ENCODE measurements at regions of chr7 and their contacts with region 1.

Region 1: GRCh38 chr7:12524794-12525386 is 45.6 kb upstream of the SCIN start:
- DNase-seq: no peak
- H3K4me3 Mint-ChIP-seq: no peak overlapping the region
- H3K27ac Mint-ChIP-seq: no peak overlapping the region
- H3K4me1 Mint-ChIP-seq: no peaks in the 10 kb centered on the region
- H3K27me3 Mint-ChIP-seq: peaks cover 12% of the 10 kb centered on the region

Region 2: DNA sequence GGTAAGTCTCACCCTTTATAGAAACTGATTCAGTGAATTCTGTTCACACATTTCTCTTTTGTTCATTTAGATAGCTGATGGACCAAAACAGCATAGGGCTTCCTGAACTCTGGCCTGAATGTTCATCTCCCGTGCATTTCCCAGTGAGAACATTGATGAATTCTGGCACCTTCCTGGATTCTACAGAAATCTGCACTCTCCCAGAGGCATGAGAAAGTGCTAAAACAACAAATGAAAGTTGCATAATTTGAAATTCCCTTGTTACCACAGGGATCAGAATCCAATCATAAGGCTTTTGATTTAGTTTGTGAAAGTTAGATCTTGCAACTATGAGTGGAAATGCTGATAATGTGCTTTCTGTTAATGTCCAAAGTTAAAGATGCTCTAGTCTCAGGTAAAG is 16.0 kb after region 1 on chr7:
- CTCF ChIA-PET with region 1: interaction called, 12 read pairs
- POLR2A ChIA-PET with region 1: no interaction called
- intact Hi-C with region 1: no loop called
- DNase-seq: no peak
- H3K4me3 Mint-ChIP-seq: no peak overlapping the region
- H3K27ac Mint-ChIP-seq: no peak overlapping the region
- H3K4me1 Mint-ChIP-seq: no peaks in the 10 kb centered on the region
- H3K27me3 Mint-ChIP-seq: peaks cover 4% of the 10 kb centered on the region

Region 3: GRCh38 chr7:12594056-12594455 is 69.2 kb after region 1 on chr7:
- CTCF ChIA-PET with region 1: no interaction called
- POLR2A ChIA-PET with region 1: no interaction called
- intact Hi-C with region 1: no loop called
- DNase-seq: no peak
- H3K4me3 Mint-ChIP-seq: no peak overlapping the region
- H3K27ac Mint-ChIP-seq: no peak overlapping the region
- H3K4me1 Mint-ChIP-seq: no peaks in the 10 kb centered on the region
- H3K27me3 Mint-ChIP-seq: peaks cover 2% of the 10 kb centered on the region

Region 4: DNA sequence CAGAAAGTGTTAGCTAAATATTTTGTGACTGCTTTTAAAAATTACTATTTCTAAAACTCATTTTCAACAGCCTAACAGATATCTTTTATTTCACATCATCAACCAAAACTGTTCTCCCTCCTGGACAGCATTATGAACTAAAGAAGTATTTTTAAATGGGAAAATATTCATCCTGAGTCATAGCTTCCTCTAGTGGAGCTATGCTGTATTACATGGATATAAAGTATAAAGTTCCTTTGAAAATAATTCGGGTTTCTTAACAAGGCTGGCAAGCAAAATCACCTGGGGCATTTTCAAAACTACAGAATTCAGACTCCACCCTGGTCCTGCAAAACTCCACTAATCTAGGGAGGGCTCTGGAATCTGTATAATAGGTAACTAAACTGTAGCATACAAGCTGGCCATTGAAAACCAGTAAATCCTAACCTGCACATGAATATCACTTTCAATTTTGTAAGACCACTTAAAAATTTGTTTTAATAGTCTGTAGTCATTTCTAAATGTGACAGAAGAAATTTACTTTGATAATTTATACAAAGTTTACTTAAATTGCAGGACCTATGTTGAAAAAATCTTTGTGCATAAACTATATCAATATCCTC is 99.1 kb after region 1 on chr7:
- CTCF ChIA-PET with region 1: interaction called, 41 read pairs
- POLR2A ChIA-PET with region 1: no interaction called
- intact Hi-C with region 1: loop called (anchors 1 kb)
- DNase-seq: no peak
- H3K4me3 Mint-ChIP-seq: no peak overlapping the region
- H3K27ac Mint-ChIP-seq: no peak overlapping the region
- H3K4me1 Mint-ChIP-seq: no peaks in the 10 kb centered on the region
- H3K27me3 Mint-ChIP-seq: peaks cover 20% of the 10 kb centered on the region

Region 5: DNA sequence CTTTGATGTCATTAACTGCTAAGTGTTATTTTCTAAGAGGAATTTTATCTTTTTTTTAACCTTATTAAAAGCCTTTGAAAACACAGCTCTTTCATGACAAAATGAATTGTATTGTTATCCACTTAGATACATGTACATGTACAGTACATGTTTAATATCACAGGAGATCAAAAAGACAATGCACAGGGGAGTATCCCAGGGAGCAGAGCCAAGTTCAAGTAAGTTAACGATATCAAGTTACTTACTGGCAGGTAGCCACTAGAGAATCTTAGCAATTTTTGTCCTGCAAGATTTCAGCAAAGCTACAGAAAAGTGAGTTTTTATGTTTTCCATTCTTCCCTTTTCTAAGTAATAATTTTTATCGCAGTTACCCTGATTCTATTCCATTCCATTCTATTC is 128.6 kb after region 1 on chr7:
- CTCF ChIA-PET with region 1: no interaction called
- POLR2A ChIA-PET with region 1: no interaction called
- intact Hi-C with region 1: no loop called
- DNase-seq: no peak
- H3K4me3 Mint-ChIP-seq: no peak overlapping the region
- H3K27ac Mint-ChIP-seq: no peak overlapping the region
- H3K4me1 Mint-ChIP-seq: no peaks in the 10 kb centered on the region
- H3K27me3 Mint-ChIP-seq: no peaks in the 10 kb centered on the region

Region 6: DNA sequence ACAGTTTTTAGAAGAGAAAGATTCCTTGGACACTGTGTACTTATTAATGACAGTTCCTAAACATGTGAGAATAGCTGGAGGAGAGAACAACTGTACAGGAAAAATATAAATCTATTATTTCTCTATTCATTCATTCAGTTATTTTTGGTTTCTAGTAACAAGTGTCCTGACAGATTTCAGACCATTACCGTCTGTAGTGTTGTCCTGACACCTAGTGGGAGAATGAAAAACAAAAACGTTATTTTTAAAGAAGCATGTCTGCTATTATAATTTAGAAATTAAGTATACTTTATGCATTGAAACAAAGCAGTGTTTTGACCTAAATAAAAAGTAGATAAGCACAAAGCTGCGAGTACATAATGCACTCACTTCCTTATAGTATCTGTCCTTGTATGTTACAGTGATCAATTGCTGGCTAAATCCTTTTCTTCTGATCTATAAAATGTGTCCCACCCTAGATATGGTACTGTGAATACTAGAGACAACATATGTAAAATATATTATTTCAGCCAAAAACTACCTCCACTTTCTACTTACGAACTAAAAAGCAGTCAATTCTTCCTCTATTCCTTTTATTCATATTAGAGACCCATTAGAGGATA is 738.1 kb after region 1 on chr7:
- CTCF ChIA-PET with region 1: interaction called, 11 read pairs
- POLR2A ChIA-PET with region 1: no interaction called
- intact Hi-C with region 1: loop called (anchors 1 kb)
- DNase-seq: no peak
- H3K4me3 Mint-ChIP-seq: no peak overlapping the region
- H3K27ac Mint-ChIP-seq: no peak overlapping the region
- H3K4me1 Mint-ChIP-seq: no peaks in the 10 kb centered on the region
- H3K27me3 Mint-ChIP-seq: peaks cover 2% of the 10 kb centered on the region

Region 7: DNA sequence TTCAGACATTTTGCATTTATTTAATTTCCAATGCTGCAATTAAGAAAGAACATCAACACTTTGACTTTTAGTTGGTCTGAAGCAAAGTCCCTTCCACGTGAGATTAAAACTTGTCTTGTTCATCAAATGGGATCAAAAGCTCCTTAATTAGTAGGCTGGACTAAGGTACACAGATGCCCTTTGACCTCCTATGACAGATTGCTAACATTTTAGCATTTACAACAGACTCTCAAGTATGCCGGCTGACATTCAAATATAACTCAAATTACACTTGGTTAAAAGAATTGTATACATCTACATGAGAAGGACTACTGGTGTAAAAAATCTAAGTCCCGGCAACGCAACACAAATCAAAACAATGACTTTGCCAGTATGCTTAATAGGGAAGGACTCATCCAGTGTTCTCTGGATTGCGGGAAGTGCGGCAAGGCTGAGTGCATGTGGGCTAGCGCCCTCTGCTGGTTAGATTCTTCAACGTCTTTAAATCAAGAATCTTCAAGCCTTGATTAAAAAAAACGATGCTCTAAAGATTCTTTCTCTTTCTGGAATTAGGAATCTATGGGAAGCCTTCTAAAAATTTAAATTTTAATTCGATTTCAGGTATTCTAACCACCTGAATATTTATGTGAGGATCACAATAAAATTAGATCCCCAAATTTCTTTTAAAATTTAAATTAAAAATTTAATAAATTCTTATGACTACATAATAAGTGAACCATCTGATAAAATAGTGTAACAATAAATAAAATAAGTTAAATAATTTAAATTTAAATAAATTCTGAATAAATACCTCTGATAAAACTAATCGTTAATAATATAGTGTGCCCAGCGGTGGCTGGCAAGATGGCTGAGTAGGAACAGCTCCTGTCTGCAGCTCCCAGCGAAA is 1932.9 kb after region 1 on chr7:
- CTCF ChIA-PET with region 1: interaction called, 3 read pairs
- POLR2A ChIA-PET with region 1: no interaction called
- intact Hi-C with region 1: loop called (anchors 5 kb)
- DNase-seq: peak; percentile 49
- H3K4me3 Mint-ChIP-seq: no peak overlapping the region
- H3K27ac Mint-ChIP-seq: no peak overlapping the region
- H3K4me1 Mint-ChIP-seq: no peaks in the 10 kb centered on the region
- H3K27me3 Mint-ChIP-seq: peaks cover 5% of the 10 kb centered on the region

Measured in activated CD4-positive, alpha-beta memory T cell treated with anti-CD3 and anti-CD28 coated beads for 36 hours (primary cell).